Activated CD4-positive, alpha-beta T cell treated with anti-CD3 and anti-CD28 coated beads, Interleukin-2, amount 10 ng/mL, durations not matched to agents 24 days and 14 days (primary cell): ENCODE measurements at regions of chr10 and their contacts with region 1.

Region 1: DNA sequence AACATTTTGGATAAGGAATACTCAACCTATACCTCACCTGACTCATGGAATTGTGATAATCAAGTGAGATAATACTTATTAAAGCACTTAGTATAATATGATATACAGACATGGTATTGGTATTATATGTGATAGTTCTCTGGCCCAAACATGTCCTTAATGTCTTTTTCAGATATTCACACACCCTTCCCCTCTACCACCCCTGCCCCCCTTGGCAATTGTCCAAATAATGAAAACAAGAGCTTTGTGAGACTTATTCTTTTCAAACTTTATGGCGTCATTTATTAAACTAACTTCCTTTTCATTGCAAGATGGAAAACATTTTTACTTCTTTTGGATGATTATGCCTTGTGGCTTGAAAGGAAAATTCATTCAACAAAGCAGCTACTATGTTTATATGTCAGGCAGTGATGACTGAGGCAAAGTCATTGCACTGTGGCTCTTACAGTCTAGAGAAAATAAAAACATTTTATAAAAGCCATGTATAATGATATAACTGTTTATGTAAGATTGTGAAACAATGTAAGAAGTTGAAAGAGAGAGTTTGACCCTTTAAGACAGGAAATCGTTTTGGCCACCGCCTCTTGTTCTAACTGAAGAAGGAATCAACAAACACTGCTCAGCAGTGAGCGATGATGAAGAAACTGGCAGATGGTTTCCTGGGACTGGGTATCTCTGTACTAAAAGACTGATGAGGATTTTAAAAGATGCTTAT is 27.4 kb downstream of the MINPP1 start:
- DNase-seq: no peak
- H3K4me3 Mint-ChIP-seq: no peak overlapping the region
- H3K27ac Mint-ChIP-seq: no peak overlapping the region
- H3K4me1 Mint-ChIP-seq: peaks cover under 1% of the 10 kb centered on the region
- H3K27me3 Mint-ChIP-seq: no peaks in the 10 kb centered on the region

Region 2: GRCh38 chr10:87505366-87506109 is 26.5 kb before region 1 on chr10:
- intact Hi-C with region 1: no loop called
- DNase-seq: peak; percentile 84
- H3K4me3 Mint-ChIP-seq: peak overlapping the region; percentile 90
- H3K27ac Mint-ChIP-seq: peak overlapping the region; percentile 85
- H3K4me1 Mint-ChIP-seq: peaks cover 28% of the 10 kb centered on the region
- H3K27me3 Mint-ChIP-seq: peaks cover 11% of the 10 kb centered on the region

Region 3: GRCh38 chr10:87734987-87735827 is 203.1 kb after region 1 on chr10:
- intact Hi-C with region 1: loop called (anchors 1 kb)
- DNase-seq: peak; percentile 59
- H3K4me3 Mint-ChIP-seq: no peak overlapping the region
- H3K27ac Mint-ChIP-seq: no peak overlapping the region
- H3K4me1 Mint-ChIP-seq: no peaks in the 10 kb centered on the region
- H3K27me3 Mint-ChIP-seq: peaks cover 29% of the 10 kb centered on the region

Region 4: GRCh38 chr10:87771871-87772500 is 239.9 kb after region 1 on chr10:
- intact Hi-C with region 1: loop called (anchors 5 kb)
- DNase-seq: no peak
- H3K4me3 Mint-ChIP-seq: no peak overlapping the region
- H3K27ac Mint-ChIP-seq: no peak overlapping the region
- H3K4me1 Mint-ChIP-seq: peaks cover 8% of the 10 kb centered on the region
- H3K27me3 Mint-ChIP-seq: no peaks in the 10 kb centered on the region

Region 5: DNA sequence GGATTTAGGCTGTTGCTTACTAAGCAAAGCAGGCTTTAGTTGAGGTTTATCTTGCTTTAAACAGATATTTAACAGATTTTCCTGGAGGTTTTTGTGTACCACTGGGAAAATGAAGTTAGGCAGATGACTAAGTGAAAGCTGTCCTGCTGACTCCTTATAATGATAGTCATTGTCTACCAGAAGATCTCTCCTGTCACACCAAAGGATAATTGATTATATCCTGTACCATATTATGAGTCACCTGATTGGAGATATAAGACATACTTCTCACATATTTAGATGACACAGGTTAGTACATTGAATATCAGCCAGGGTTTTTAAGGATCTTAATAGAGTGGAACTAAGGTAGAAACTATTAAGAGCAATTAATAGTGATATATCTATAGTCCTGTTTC is 399.8 kb after region 1 on chr10:
- intact Hi-C with region 1: no loop called
- DNase-seq: no peak
- H3K4me3 Mint-ChIP-seq: no peak overlapping the region
- H3K27ac Mint-ChIP-seq: no peak overlapping the region
- H3K4me1 Mint-ChIP-seq: peaks cover 35% of the 10 kb centered on the region
- H3K27me3 Mint-ChIP-seq: no peaks in the 10 kb centered on the region

Region 6: GRCh38 chr10:88744002-88744401 is 1211.9 kb after region 1 on chr10:
- intact Hi-C with region 1: no loop called
- DNase-seq: no peak
- H3K4me3 Mint-ChIP-seq: no peak overlapping the region
- H3K27ac Mint-ChIP-seq: no peak overlapping the region
- H3K4me1 Mint-ChIP-seq: no peaks in the 10 kb centered on the region
- H3K27me3 Mint-ChIP-seq: peaks cover 52% of the 10 kb centered on the region